Posterior vena cava (tissue), 2 donors: ENCODE measurements at regions of chr5 and their contacts with region 1.

Region 1: DNA sequence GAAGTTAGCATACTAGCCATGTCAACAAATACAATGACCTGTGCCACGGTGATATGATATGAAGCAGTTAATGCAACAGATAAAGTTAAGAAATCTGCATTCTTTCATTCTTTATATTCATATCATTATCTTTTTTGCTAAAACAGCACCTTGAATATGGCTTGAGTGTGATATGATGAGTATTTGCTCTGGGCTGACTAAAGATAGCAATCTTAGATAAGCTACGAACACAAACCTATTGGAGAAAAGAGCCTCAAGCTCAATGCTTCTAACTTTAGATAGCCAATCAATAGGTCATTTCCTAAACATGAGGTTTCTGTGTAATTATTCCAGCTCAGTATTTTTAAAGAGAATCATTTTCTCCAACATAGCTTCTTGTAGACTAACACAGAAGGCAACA is 61.7 kb downstream of the NR2F1 start:
- DNase-seq: no peak

Region 2: GRCh38 chr5:94010814-94011213 is 366.1 kb after region 1 on chr5:
- intact Hi-C with region 1: no loop called
- DNase-seq: no peak

Region 3: DNA sequence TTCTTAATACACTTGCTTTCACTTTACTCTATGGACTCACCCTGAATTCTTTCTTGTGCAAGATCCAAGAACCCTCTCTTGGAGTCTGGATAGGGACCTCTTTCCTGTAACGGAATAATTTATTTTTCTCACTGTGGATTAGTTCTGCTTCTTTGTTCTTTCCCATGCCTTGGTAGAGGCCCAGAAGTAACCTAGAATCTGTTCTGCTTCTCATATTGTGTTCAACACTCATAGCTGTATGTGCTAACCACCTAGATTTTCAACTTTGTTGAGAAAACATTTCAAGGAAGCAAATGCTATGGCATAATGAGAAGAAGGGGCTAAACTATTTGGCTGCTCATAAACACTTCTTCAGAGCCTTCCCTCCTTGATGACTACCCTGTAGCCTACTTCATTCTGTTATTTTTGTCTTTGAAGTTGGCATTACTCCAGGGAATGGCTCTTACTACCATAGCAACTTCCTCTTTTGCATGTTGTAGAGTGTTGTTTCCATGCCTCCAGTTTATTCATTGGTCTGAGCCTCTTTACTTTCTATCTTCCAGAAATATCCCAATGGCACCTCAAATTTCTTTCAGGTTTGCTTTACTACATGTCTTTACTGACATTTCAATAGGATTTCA is 899.4 kb after region 1 on chr5:
- intact Hi-C with region 1: loop called in 1 of 2 experiments (anchors 5 kb)
- DNase-seq: no peak